ENCODE measurements at regions of chr2 and their contacts with region 1.

Region 1: DNA sequence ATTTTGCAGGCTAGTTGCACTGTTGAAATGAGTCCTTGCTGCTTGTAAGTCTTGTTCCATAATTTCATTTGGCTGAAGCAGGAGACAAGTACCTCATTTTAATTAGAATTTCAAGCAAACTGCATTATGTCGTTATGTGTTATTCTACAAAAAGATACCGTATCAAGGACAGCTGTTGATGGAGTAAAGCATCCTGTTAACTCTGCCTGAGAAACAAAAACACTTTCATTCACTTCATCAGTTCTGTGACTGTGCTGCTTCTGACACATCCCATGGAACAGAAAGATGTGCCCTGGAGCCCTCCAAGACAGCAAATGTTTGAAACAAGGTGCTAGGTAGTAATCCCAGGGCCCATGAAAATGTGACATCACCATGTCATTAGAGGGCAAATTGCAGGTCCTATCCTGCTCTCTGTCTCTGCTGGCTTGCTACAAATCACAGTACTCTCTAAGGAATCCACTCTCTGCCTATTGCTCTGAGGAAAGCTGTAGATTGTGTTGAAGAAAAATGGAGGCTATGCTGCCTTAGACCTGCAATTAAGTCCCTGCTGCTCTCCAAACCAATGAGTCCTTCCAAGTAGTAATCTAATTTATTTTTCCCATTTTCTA is 209.7 kb upstream of the PARD3B start:
- DNase-seq: no peak
- H3K4me3 ChIP-seq: no peak overlapping the region
- H3K27ac ChIP-seq: no peak overlapping the region
- H3K4me1 ChIP-seq: peaks cover 0 to 3% (median 0%) of the 10 kb centered on the region in 3 donors
- H3K27me3 ChIP-seq: no peaks in the 10 kb centered on the region
- CTCF ChIP-seq: no peak

Region 2: GRCh38 chr2:203993560-203993959 is 342.0 kb before region 1 on chr2:
- intact Hi-C with region 1: no loop called
- DNase-seq: no peak
- H3K4me3 ChIP-seq: no peak overlapping the region
- H3K27ac ChIP-seq: no peak overlapping the region
- H3K4me1 ChIP-seq: no peaks in the 10 kb centered on the region
- H3K27me3 ChIP-seq: no peaks in the 10 kb centered on the region
- CTCF ChIP-seq: no peak

Region 3: DNA sequence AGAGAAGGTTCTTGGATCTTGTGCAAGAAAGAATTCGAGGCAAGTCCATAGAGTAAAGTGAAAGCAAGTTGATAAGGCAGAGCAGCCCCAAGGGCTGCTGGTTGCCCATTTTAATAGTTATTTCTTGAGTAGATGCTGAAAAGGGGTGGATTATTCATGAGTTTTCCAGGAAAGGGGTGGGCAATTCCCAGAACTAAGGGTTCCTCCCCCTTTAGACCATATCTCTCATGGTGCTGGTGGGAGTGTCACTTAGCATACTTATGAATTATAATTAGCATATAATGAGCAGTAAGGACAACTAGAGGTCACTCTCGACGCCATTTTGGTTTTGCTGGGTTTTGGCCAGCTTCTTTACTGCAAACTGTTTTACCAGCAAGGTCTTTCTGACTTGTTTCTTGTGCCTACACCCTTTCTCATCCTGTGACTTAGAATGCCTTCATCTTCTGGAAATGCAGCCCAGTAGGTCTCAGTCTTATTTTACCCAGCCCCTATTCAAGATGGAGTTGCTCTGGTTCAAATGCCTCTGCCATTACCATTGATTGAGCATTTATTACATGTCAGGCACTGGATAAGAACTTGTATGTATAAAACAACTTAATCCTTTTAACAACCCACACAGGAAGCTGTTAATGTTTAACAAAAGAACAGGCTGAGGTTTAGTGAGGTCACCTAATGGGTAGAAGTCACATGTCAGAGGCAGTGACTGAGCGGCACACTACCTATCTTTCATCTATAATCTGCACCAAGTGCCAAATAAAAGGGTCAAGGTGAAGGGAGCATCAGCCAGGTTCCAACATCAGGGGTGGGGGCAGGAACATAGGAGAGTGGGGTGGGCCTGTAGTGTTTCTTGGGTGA is 148.1 kb before region 1 on chr2:
- intact Hi-C with region 1: no loop called
- DNase-seq: peak in 2 of 5 donors; percentile 70 to 75
- H3K4me3 ChIP-seq: no peak overlapping the region
- H3K27ac ChIP-seq: no peak overlapping the region
- H3K4me1 ChIP-seq: peaks cover 0 to 6% (median 0%) of the 10 kb centered on the region in 3 donors
- H3K27me3 ChIP-seq: no peaks in the 10 kb centered on the region
- CTCF ChIP-seq: no peak

Region 4: GRCh38 chr2:204691911-204692510 is 356.5 kb after region 1 on chr2:
- intact Hi-C with region 1: loop called (anchors 10 kb)
- DNase-seq: peak in 4 of 5 donors; percentile 63 to 93 (median 82)
- H3K4me3 ChIP-seq: no peak overlapping the region
- H3K27ac ChIP-seq: no peak overlapping the region
- H3K4me1 ChIP-seq: no peaks in the 10 kb centered on the region
- H3K27me3 ChIP-seq: no peaks in the 10 kb centered on the region
- CTCF ChIP-seq: peak; percentile 75

Measured in kidney (tissue), 22 donors.